CD14-positive monocyte (primary cell): ENCODE measurements at regions of chr3 and their contacts with region 1.

Region 1: GRCh38 chr3:10758304-10759061 is 57.5 kb upstream of the SLC6A11 start:
- DNase-seq: peak; percentile 23 to 54 (median 46)
- H3K4me3 ChIP-seq: no peak overlapping the region
- H3K4me3 Mint-ChIP-seq: no peak overlapping the region
- H3K27ac ChIP-seq: no peak overlapping the region
- H3K27ac Mint-ChIP-seq: no peak overlapping the region
- H3K4me1 ChIP-seq: no peaks in the 10 kb centered on the region
- H3K4me1 Mint-ChIP-seq: no peaks in the 10 kb centered on the region
- H3K27me3 ChIP-seq: no peaks in the 10 kb centered on the region
- H3K27me3 Mint-ChIP-seq: peaks cover 10 to 16% (median 10%) of the 10 kb centered on the region in 3 donors
- CTCF ChIP-seq: peak; percentile 76

Region 2: DNA sequence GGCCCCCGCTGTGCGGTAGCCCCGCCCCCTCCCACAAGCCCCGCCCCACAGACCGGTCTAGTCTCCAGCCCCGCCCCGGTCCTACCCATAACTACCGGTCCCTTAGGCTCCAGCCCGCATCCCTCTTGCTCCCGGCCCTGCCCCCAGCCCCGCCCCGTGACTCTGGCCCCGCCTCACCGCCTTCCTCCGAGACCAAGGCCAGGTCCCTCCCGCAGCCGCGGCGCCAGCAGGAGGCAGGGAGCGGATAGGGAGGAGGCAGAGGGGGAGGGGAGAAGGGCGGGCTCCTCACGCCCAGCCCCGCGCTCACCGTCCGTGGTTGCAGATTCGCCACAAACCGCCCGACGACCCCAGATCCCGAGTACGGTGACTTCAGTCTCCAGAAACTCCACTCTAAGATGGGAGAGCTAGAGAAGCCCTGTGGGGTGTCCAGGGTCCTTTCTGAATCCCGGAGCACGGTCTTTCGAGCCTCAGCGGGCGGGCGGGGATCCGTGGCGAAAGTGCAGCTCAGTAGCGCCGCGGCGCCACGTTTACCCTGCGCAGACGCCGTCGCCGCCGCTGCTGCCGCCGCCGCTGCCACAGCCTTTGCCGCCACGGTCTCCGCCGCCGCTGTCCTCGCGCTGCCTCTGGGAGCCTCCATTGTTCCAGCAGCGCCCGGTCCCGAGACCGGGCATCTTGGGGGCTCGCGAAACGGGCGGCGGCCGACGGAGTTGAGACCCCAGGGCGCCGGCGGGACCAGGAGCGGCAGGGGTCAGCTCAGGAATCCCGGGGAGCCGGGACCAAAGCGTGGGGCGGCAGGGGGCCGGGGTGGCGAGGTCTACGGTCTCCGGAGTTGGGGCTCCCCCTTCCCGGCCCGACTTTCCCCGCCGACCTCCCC is 1027.0 kb before region 1 on chr3 and contains the start of gene BRPF1:
- intact Hi-C with region 1: no loop called
- DNase-seq: peak; percentile 99 to 100 (median 99)
- H3K4me3 ChIP-seq: peak within 1 kb of the TSS; percentile 81 to 94 (median 85)
- H3K4me3 Mint-ChIP-seq: peak within 1 kb of the TSS; percentile 87 to 95
- H3K27ac ChIP-seq: peak within 1 kb of the TSS; percentile 90 to 96
- H3K27ac Mint-ChIP-seq: peak within 1 kb of the TSS; percentile 91 to 99 (median 97)
- H3K4me1 ChIP-seq: peaks cover 50 to 59% of the 10 kb centered on the region in 2 donors
- H3K4me1 Mint-ChIP-seq: peaks cover 57% of the 10 kb centered on the region
- H3K27me3 ChIP-seq: no peaks in the 10 kb centered on the region
- H3K27me3 Mint-ChIP-seq: peaks cover 0 to 1% (median 0%) of the 10 kb centered on the region in 3 donors
- CTCF ChIP-seq: no peak
- polyA plus RNA-seq, gene BRPF1: 5.1 to 22.5 (median 10.4) TPM

Region 3: DNA sequence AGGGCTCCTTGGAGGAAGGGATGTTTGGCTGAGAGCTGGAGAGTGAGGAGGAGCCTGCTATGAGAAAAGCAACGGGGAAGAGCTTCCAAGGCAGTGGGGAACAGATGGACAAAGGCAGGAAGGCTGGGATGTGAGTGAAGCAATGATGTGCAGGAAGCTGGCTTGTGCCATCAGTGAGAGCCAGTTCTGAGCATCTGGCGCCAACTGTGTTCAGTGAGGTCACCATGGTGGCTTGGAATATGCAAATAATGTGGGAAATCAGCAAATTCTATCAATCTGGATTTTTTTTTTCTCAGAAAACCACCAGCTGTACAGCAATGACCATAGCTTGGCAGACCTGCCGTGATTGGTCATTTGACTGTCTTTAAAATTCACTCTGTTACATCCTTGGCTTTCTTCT is 33.1 kb after region 1 on chr3:
- intact Hi-C with region 1: no loop called
- DNase-seq: no peak
- H3K4me3 ChIP-seq: no peak overlapping the region
- H3K4me3 Mint-ChIP-seq: no peak overlapping the region
- H3K27ac ChIP-seq: no peak overlapping the region
- H3K27ac Mint-ChIP-seq: no peak overlapping the region
- H3K4me1 ChIP-seq: no peaks in the 10 kb centered on the region
- H3K4me1 Mint-ChIP-seq: no peaks in the 10 kb centered on the region
- H3K27me3 ChIP-seq: peaks cover 9 to 15% of the 10 kb centered on the region in 2 donors
- H3K27me3 Mint-ChIP-seq: peaks cover 11 to 25% (median 13%) of the 10 kb centered on the region in 3 donors
- CTCF ChIP-seq: no peak

Region 4: DNA sequence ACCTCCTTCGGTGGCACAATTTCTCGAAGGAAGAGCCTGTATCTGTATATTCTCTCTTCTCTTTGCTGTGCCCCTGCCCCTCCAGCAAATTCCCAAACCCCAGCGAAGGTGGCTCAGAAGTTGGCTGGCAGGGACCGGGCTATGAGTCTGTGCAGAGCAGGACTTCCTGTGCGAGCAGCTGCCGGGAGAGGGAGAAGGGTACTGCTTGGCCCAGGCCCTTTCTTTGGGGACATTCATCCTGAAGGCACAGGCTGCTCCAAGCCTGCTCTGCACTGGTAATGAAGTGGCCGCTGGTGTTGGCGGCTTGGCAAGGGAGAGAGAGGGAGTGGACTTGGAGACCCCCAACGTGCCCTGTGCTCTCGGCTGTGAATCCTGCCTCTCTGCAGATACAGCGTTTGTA is 59.0 kb after region 1 on chr3:
- intact Hi-C with region 1: no loop called
- DNase-seq: no peak
- H3K4me3 ChIP-seq: no peak overlapping the region
- H3K4me3 Mint-ChIP-seq: peak overlapping the region in 1 of 2 donors; percentile 39
- H3K27ac ChIP-seq: no peak overlapping the region
- H3K27ac Mint-ChIP-seq: no peak overlapping the region
- H3K4me1 ChIP-seq: no peaks in the 10 kb centered on the region
- H3K4me1 Mint-ChIP-seq: peaks cover 1% of the 10 kb centered on the region
- H3K27me3 ChIP-seq: peaks cover 24 to 31% of the 10 kb centered on the region in 2 donors
- H3K27me3 Mint-ChIP-seq: peaks cover 35 to 41% (median 39%) of the 10 kb centered on the region in 3 donors
- CTCF ChIP-seq: no peak

Region 5: DNA sequence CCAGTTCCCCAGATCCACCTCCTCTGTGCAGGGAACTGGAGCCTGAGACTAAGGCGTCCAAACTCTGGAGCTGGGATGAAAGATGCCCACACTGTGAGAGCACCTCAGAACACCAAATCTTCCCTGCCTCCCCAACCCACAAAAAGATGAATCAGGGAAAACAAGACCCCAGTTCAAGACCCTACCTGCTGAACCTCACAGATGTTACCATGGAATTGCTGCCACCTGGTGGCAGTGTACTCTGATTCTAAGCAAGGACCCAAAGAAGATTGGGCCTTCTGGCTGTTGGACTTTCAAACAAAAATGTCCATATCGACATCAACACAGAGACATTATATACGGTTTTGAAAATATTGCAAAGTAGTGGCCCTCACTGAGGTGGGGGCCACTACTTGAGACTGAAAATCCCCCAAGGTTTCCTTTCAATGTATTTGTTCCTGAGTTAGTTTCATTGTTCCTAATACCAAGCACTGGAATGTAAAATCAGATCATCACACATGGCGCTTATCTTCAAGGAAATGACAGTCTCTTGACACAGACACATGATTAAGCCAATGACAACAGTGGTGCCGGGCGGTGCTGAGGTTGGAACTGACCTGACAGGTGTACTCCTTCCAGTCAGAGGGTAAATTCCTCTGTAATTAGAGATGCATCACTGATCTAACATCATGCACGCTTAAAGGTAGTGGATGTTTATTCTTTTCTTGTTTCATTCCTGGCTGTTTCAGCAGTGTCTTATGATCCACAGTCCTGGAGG is 125.2 kb after region 1 on chr3:
- intact Hi-C with region 1: loop called (anchors 5 kb)
- DNase-seq: no peak
- H3K4me3 ChIP-seq: no peak overlapping the region
- H3K4me3 Mint-ChIP-seq: no peak overlapping the region
- H3K27ac ChIP-seq: no peak overlapping the region
- H3K27ac Mint-ChIP-seq: no peak overlapping the region
- H3K4me1 ChIP-seq: peaks cover 5 to 6% of the 10 kb centered on the region in 2 donors
- H3K4me1 Mint-ChIP-seq: peaks cover 7% of the 10 kb centered on the region
- H3K27me3 ChIP-seq: no peaks in the 10 kb centered on the region
- H3K27me3 Mint-ChIP-seq: peaks cover 0 to 5% (median 2%) of the 10 kb centered on the region in 3 donors
- CTCF ChIP-seq: peak; percentile 3

Region 6: DNA sequence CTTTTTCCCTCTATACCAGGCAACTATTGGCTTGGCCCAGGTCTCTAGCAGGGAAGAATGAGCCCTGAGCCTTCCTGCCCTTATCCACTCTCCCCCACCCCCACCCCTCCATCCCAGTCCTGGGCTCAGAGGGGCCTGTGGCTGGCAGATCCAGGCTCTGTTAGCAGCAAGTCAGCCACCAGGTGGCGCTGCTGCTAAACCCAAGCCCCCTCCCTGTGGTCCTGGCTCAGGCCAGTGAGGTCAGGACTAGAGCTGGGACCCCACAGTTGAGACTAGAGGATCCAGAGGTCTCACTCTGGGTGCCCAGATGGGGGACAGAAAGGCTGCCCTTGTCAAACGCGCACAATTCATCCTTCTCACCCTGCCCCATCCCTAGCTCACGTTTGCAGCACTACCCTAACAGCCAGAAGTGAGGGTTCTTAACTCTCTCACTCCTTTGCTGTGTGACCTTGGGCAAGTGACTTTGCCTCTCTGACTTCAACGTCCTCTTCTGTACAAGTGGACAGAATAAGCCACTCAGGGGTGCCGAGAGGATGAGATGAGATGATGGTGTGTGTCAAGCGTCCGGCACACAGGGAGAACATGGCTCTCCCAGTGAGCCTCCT is 187.3 kb after region 1 on chr3:
- intact Hi-C with region 1: loop called (anchors 5 to 10 kb)
- DNase-seq: peak; percentile 39 to 54 (median 53)
- H3K4me3 ChIP-seq: no peak overlapping the region
- H3K4me3 Mint-ChIP-seq: no peak overlapping the region
- H3K27ac ChIP-seq: no peak overlapping the region
- H3K27ac Mint-ChIP-seq: no peak overlapping the region
- H3K4me1 ChIP-seq: no peaks in the 10 kb centered on the region
- H3K4me1 Mint-ChIP-seq: no peaks in the 10 kb centered on the region
- H3K27me3 ChIP-seq: no peaks in the 10 kb centered on the region
- H3K27me3 Mint-ChIP-seq: peaks cover 2 to 10% (median 6%) of the 10 kb centered on the region in 3 donors
- CTCF ChIP-seq: peak; percentile 86

Region 7: DNA sequence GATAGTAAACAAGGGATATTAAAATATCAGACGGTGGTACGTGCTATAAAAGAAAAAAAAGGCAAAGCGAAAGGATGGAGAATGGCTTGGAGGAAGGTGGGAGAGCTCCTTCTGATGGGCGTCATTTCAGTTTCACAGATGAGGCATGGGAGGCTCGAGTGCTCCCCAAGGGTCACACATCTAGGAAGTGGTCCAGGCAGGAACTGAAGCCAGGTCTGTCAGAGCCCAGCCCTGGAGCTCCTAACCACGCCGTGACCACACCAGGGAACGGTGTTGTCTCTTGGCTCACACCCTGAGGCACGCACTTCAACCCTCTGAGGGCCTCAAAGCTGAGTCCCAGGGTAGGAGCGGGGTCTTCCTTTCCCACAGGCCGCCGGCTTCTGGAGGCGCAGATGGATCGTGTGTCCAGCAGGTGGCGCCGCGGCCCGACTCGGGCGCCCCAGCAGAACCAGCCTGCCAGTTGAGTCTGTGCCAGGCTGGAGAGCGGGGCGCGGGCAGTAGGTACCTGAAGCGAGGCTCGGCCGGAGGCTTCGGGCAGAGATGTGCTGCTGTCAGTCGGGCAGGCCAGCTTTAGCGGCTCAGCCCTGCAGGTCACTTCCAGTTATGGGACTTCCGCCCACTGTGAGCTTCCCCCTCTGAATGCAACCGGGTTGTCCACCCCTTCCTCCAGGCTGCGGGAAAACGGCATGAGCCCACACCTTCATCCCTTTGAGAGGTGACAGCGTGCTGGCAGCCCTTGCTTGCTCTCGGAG is 302.2 kb after region 1 on chr3:
- intact Hi-C with region 1: loop called in 1 of 2 experiments (anchors 10 kb)
- DNase-seq: peak; percentile 46 to 60 (median 55)
- H3K4me3 ChIP-seq: peak overlapping the region in 1 of 3 experiments; percentile 9
- H3K4me3 Mint-ChIP-seq: peak overlapping the region; percentile 47 to 56
- H3K27ac ChIP-seq: no peak overlapping the region
- H3K27ac Mint-ChIP-seq: peak overlapping the region in 1 of 7 donors; percentile 32
- H3K4me1 ChIP-seq: peaks cover 8 to 9% of the 10 kb centered on the region in 2 donors
- H3K4me1 Mint-ChIP-seq: peaks cover 9% of the 10 kb centered on the region
- H3K27me3 ChIP-seq: peaks cover 0 to 7% of the 10 kb centered on the region in 2 donors
- H3K27me3 Mint-ChIP-seq: peaks cover 9 to 18% (median 15%) of the 10 kb centered on the region in 3 donors
- CTCF ChIP-seq: peak; percentile 92

Region 8: DNA sequence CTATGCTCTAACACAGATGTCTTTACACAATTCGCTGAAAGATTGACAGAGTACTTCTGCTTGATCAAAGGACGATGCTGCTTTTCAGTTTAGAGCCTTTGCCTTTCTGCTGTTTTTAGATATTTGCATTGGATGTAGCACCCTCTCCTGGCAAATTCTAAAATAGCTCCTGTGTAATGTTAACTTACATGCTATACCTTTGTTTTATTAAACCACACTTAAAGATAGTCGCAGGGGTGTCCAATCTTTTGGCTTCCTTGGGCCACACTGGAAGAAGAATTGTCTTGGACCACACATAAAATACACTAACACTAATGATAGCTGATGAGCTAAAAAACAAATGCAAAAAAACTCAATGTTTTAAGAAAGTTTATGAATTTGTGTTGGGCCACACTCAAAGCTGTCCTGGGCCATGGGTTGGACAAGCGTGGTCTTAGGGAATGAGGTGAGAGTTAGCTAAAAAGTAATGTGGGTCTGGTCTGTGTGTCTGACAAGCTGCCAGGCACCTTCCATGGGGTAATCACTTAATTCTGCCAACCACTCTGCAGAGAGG is 576.6 kb after region 1 on chr3:
- intact Hi-C with region 1: loop called in 1 of 2 experiments (anchors 10 kb)
- DNase-seq: peak; percentile 9 to 27 (median 19)
- H3K4me3 ChIP-seq: no peak overlapping the region
- H3K4me3 Mint-ChIP-seq: no peak overlapping the region
- H3K27ac ChIP-seq: no peak overlapping the region
- H3K27ac Mint-ChIP-seq: no peak overlapping the region
- H3K4me1 ChIP-seq: no peaks in the 10 kb centered on the region
- H3K4me1 Mint-ChIP-seq: no peaks in the 10 kb centered on the region
- H3K27me3 ChIP-seq: no peaks in the 10 kb centered on the region
- H3K27me3 Mint-ChIP-seq: no peaks in the 10 kb centered on the region
- CTCF ChIP-seq: peak; percentile 61

Region 9: GRCh38 chr3:11944052-11944673 is 1185.7 kb after region 1 on chr3:
- intact Hi-C with region 1: loop called in 1 of 2 experiments (anchors 10 kb)
- DNase-seq: no peak
- H3K4me3 ChIP-seq: no peak overlapping the region
- H3K4me3 Mint-ChIP-seq: no peak overlapping the region
- H3K27ac ChIP-seq: no peak overlapping the region
- H3K27ac Mint-ChIP-seq: no peak overlapping the region
- H3K4me1 ChIP-seq: no peaks in the 10 kb centered on the region
- H3K4me1 Mint-ChIP-seq: no peaks in the 10 kb centered on the region
- H3K27me3 ChIP-seq: no peaks in the 10 kb centered on the region
- H3K27me3 Mint-ChIP-seq: peaks cover 2 to 10% (median 6%) of the 10 kb centered on the region in 3 donors
- CTCF ChIP-seq: peak; percentile 29